Activated CD8-positive, alpha-beta T cell treated with anti-CD3 and anti-CD28 coated beads, Interleukin-2, amount 10 ng/mL, durations not matched to agents 7 days and 5 days (primary cell): ENCODE measurements at regions of chr15 and their contacts with region 1.

Region 1: DNA sequence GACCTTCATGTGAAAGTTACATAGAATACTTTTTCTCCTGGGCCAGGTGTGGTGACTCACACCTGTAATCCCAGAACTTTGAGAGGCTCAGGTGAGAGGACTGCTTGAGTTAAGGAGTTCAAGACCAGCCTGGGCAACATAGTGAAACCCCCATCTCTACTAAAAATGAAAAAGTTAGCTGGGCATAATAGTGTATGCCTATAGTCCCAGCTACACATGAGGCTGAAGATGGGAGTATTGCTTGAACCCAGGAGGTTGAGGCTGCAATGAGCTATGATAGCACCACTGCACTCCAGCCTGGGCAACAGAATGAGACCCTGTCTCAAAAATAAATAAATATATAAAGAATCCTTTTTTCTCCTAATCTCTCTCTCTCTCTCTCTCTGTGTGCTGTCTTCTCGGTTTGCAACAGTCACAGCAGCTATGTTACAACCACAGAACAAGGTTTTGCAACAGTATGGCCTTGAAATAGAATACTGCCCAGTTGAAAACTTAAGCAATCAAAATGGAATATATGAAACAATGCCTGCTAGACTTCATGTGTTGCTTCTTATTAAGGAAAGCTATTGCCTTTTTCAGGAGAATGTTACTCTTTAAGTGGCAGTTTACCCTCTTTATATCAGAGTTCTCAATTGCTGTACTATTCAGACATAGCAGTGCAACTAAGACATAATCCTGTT is 12.3 kb upstream of the DENND4A start:
- DNase-seq: no peak
- ATAC-seq: no peak
- H3K4me3 Mint-ChIP-seq: no peak overlapping the region
- H3K27ac Mint-ChIP-seq: no peak overlapping the region
- H3K4me1 Mint-ChIP-seq: peaks cover 37% of the 10 kb centered on the region
- H3K27me3 Mint-ChIP-seq: no peaks in the 10 kb centered on the region

Region 2: GRCh38 chr15:65530314-65531122 is 273.9 kb before region 1 on chr15 and contains the start of gene HACD3:
- CTCF ChIA-PET with region 1: no interaction called
- POLR2A ChIA-PET with region 1: no interaction called
- DNase-seq: peak; percentile 90
- ATAC-seq: peak; percentile 99
- H3K4me3 Mint-ChIP-seq: peak within 1 kb of the TSS; percentile 83
- H3K27ac Mint-ChIP-seq: peak within 1 kb of the TSS; percentile 89
- H3K4me1 Mint-ChIP-seq: peaks cover 31% of the 10 kb centered on the region
- H3K27me3 Mint-ChIP-seq: no peaks in the 10 kb centered on the region
- total RNA-seq, gene HACD3: 34.8 to 36.5 TPM

Region 3: GRCh38 chr15:65595960-65596359 is 208.4 kb before region 1 on chr15:
- CTCF ChIA-PET with region 1: no interaction called
- POLR2A ChIA-PET with region 1: no interaction called
- DNase-seq: peak; percentile 30
- ATAC-seq: no peak
- H3K4me3 Mint-ChIP-seq: no peak overlapping the region
- H3K27ac Mint-ChIP-seq: no peak overlapping the region
- H3K4me1 Mint-ChIP-seq: peaks cover 7% of the 10 kb centered on the region
- H3K27me3 Mint-ChIP-seq: no peaks in the 10 kb centered on the region

Region 4: DNA sequence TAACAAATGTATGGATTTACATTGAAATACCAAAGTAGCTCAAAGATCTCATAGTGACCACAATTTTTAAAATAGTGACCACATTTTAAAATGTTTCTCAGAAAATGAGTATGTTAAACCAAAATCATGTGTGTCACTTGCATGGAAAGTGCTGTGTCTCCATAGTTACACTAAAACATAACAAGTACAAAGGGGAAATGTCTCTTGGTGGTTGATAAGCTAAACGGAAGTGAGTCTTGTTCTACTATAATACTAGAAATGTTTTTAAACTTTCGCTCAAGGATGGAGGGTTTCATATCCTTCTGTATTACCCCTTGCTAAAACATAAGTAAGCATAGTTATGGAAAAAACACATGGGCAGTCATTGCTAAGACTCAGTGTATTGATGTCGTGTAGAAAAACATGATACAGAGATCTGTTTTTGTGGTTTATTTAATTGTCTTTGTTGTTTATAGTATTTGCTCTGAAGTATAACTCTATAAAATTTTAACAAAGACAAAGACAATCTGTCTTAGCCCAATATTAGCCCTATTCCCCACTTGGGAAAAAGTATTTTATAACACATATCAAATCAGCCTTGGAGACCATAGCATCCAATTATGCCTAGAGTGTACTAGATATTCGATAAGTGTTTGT is 14.7 kb after region 1 on chr15:
- CTCF ChIA-PET with region 1: interaction called, 27 read pairs
- POLR2A ChIA-PET with region 1: interaction called, 12 read pairs
- DNase-seq: peak; percentile 42
- ATAC-seq: peak; percentile 84
- H3K4me3 Mint-ChIP-seq: peak overlapping the region; percentile 50
- H3K27ac Mint-ChIP-seq: peak overlapping the region; percentile 93
- H3K4me1 Mint-ChIP-seq: peaks cover 58% of the 10 kb centered on the region
- H3K27me3 Mint-ChIP-seq: no peaks in the 10 kb centered on the region

Region 5: GRCh38 chr15:65916664-65917406 is 112.4 kb after region 1 on chr15:
- CTCF ChIA-PET with region 1: no interaction called
- POLR2A ChIA-PET with region 1: no interaction called
- DNase-seq: peak; percentile 25
- ATAC-seq: peak; percentile 50
- H3K4me3 Mint-ChIP-seq: no peak overlapping the region
- H3K27ac Mint-ChIP-seq: no peak overlapping the region
- H3K4me1 Mint-ChIP-seq: peaks cover 17% of the 10 kb centered on the region
- H3K27me3 Mint-ChIP-seq: no peaks in the 10 kb centered on the region